ENCODE measurements at regions of chr7 and their contacts with region 1.

Region 1: GRCh38 chr7:40899651-40900507 is 765.1 kb downstream of the SUGCT start:
- DNase-seq: no peak
- H3K4me3 ChIP-seq: peak overlapping the region; percentile 13 to 14
- H3K27ac ChIP-seq: peak overlapping the region; percentile 61 to 72
- H3K4me1 ChIP-seq: peaks cover 0 to 21% (median 0%) of the 10 kb centered on the region in 4 donors
- H3K27me3 ChIP-seq: no peaks in the 10 kb centered on the region
- CTCF ChIP-seq: no peak

Region 2: DNA sequence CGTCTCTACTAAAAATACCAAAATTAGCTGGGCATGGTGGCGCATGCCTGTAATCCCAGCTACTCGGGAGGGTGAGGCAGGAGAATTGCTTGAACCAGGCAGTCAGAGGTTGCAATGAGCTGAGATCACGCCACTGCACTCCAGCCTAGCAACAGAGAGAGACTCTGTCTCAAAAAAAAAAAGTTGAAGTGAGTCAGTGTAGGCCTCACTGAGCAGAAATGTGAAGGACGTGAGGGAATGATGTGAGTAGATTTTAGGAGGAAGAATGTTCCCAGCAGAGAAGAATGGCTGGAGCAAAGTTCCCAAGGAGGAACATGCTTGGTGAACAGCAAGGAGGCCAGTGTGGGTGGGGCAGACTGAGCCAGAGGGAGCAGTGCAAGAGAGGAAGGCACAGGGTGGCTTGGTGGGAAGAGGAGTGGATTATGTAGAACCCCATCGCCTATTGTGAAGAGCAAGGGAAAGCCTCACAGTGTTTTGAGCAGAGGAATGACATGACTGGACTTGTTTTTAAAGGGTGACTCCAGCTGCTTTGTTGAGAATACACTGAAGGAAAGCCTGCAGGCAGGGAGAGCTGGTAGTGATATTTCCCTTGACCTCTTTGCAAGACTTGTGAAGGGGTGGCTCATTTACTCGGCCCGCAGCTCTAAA is 56.4 kb before region 1 on chr7:
- intact Hi-C with region 1: loop called (anchors 10 kb)
- DNase-seq: no peak
- H3K4me3 ChIP-seq: no peak overlapping the region
- H3K27ac ChIP-seq: peak overlapping the region; percentile 37 to 66
- H3K4me1 ChIP-seq: peaks cover 0 to 42% (median 5%) of the 10 kb centered on the region in 4 donors
- H3K27me3 ChIP-seq: no peaks in the 10 kb centered on the region
- CTCF ChIP-seq: no peak

Region 3: DNA sequence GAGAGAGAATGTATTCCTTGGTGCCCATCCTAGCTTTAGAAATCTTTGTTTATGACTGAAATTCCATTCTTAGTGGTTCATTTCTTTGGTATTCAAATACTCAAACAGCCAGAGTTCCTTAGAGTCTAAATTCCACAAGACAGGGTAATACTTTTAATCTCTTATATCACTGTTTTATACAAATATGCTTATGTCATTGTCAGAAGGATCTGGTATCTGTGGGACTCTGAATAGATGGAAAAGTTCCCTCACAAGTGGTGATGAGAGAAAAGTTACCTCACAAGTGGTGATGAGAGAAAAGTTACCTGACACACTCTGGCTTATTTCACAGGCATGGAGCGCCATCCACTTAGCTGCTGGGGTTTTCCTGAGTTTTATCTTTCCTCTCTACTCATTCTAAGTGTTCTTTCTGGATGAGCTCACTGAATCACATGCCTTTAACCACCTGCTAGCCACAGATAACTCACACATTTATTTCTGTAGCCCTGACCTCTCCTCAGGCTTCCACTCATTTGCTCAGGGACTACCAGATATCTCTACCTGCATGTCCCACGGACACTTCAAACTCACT is 18.9 kb after region 1 on chr7:
- intact Hi-C with region 1: no loop called
- DNase-seq: no peak
- H3K4me3 ChIP-seq: no peak overlapping the region
- H3K27ac ChIP-seq: peak overlapping the region in 1 of 2 donors; percentile 21
- H3K4me1 ChIP-seq: peaks cover 0 to 16% (median 1%) of the 10 kb centered on the region in 4 donors
- H3K27me3 ChIP-seq: no peaks in the 10 kb centered on the region
- CTCF ChIP-seq: no peak

Region 4: GRCh38 chr7:41685684-41686083 is 785.8 kb after region 1 on chr7:
- intact Hi-C with region 1: no loop called
- DNase-seq: no peak
- H3K4me3 ChIP-seq: no peak overlapping the region
- H3K27ac ChIP-seq: peak overlapping the region in 1 of 2 donors; percentile 6
- H3K4me1 ChIP-seq: peaks cover 0 to 50% (median 3%) of the 10 kb centered on the region in 4 donors
- H3K27me3 ChIP-seq: no peaks in the 10 kb centered on the region
- CTCF ChIP-seq: no peak

Measured in tibial artery (tissue), 4 donors.